Heart right ventricle (tissue), 16 donors: ENCODE measurements at regions of chr9 and their contacts with region 1.

Region 1: DNA sequence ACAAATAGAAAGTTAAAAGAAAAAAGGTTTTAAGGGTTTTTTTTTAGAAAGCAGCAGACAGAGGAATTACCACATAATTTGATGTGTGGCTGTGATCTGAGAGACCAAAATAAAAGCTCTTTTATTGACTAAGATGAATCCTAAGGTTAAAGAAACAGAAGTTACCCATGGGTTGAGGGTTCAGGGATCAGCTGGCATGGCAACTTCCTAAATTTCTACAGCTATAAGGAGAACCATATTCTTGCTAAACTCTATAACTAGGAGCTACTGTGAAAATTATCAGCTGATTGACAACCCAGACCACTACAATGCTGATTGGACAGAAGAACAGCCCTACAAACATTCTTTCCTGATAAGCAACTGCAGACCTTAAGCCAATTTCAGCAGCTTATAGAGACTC is 40.2 kb downstream of the TMEM215 start:
- DNase-seq: no peak
- ATAC-seq: no peak
- H3K4me3 ChIP-seq: no peak overlapping the region
- H3K27ac ChIP-seq: no peak overlapping the region
- H3K4me1 ChIP-seq: no peaks in the 10 kb centered on the region
- H3K27me3 ChIP-seq: peaks cover 0 to 4% (median 0%) of the 10 kb centered on the region in 7 donors
- CTCF ChIP-seq: no peak

Region 2: DNA sequence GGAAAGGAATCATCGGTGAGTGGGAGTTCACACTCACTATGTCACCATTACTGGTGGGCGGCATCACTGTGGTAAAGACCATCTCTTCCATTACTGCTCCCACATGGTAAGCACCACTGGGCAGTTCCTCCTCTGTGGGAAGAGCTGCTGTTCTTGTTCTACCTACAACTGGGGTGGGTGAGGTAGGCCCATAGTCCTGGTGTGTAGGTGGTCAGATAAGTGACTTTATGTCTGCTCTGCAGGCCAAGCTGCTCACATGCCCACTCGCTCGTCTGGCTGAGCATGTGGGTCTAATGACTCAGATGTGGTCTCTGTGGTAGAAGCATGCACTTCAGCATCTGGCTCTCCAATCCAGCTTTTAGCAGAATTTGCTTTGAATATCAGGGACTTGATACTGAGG is 42.7 kb after region 1 on chr9:
- intact Hi-C with region 1: no loop called
- DNase-seq: no peak
- ATAC-seq: no peak
- H3K4me3 ChIP-seq: no peak overlapping the region
- H3K27ac ChIP-seq: no peak overlapping the region
- H3K4me1 ChIP-seq: peaks cover 0 to 8% (median 0%) of the 10 kb centered on the region in 9 donors
- H3K27me3 ChIP-seq: peaks cover 0 to 4% (median 0%) of the 10 kb centered on the region in 7 donors
- CTCF ChIP-seq: no peak

Region 3: DNA sequence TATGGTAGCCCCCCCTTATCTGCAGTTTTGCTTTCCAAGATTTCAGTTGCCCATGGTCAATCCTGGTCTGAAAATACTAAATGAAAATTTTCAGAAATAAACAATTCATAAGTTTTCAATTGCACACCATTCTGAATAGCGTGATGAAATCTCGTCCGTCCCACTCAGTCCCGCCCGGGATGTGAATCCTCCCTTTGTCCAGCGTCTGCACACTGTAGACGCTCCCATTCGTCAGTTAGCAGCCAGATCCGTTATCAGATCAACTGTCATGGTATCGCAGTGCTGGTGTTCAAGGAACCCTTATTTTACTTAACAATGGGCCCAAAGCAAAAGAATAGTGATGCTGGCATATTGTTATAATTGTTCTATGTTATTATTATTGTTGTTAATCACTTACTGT is 58.4 kb after region 1 on chr9:
- intact Hi-C with region 1: loop called in 1 of 10 experiments (anchors 10 kb)
- DNase-seq: no peak
- ATAC-seq: no peak
- H3K4me3 ChIP-seq: no peak overlapping the region
- H3K27ac ChIP-seq: no peak overlapping the region
- H3K4me1 ChIP-seq: peaks cover 0 to 9% (median 0%) of the 10 kb centered on the region in 9 donors
- H3K27me3 ChIP-seq: no peaks in the 10 kb centered on the region
- CTCF ChIP-seq: no peak